ENCODE measurements at regions of chr5 and their contacts with region 1.

Region 1: DNA sequence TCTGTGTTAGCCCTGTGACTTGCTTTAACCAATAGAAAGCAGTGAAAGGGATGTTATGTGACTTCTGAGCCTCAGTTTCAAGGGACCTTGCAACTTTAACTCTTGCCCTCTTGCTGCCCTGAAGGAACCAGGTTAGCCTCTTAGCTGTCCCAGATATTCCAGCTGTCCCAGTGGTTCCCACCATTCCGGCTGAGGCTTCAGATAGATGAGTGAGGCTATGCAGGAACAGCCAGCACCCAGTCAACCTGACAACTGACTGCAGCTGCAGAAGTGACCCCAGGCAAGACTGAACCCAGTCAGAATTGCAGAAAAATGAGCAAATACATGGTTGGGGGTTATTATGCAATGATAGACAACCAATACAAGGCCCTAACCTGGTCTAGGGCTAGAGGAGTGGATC is 10.4 kb upstream of the CDC23 start:
- DNase-seq: no peak
- H3K27ac ChIP-seq: no peak overlapping the region
- CTCF ChIP-seq: no peak

Region 2: DNA sequence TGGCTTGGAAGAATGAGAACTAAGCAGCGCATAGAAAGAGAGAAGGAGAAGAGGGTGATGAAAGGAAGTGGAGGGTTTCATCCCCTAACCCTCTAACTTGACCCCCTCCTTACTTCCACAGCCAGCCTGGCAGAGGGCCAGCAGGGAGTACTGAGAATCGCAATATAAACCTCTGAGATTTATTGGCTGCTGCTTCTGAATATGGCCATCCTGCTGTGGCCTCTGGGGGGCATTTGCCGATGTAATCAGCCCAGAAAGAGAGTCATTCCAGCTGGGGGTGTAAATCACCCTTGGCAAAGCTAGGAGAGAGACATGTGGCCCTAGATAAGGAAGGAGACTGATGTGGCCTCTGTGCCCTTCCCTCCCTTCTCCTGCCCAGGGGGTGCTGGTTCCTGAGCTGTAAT is 51.8 kb after region 1 on chr5:
- CTCF ChIA-PET with region 1: interaction called, 12 read pairs
- POLR2A ChIA-PET with region 1: no interaction called
- DNase-seq: no peak
- H3K27ac ChIP-seq: no peak overlapping the region
- CTCF ChIP-seq: no peak

Region 3: GRCh38 chr5:138282920-138283742 is 59.6 kb after region 1 on chr5:
- CTCF ChIA-PET with region 1: interaction called, 11 read pairs
- POLR2A ChIA-PET with region 1: no interaction called
- DNase-seq: peak; percentile 67
- H3K27ac ChIP-seq: no peak overlapping the region
- CTCF ChIP-seq: no peak; the same call in 1 of the 2 replicates

Region 4: GRCh38 chr5:138435943-138436342 is 212.4 kb after region 1 on chr5:
- CTCF ChIA-PET with region 1: no interaction called
- POLR2A ChIA-PET with region 1: no interaction called
- DNase-seq: no peak
- H3K27ac ChIP-seq: no peak overlapping the region
- CTCF ChIP-seq: no peak